CD8-positive, alpha-beta memory T cell (primary cell): ENCODE measurements at regions of chr5 and their contacts with region 1.

Region 1: DNA sequence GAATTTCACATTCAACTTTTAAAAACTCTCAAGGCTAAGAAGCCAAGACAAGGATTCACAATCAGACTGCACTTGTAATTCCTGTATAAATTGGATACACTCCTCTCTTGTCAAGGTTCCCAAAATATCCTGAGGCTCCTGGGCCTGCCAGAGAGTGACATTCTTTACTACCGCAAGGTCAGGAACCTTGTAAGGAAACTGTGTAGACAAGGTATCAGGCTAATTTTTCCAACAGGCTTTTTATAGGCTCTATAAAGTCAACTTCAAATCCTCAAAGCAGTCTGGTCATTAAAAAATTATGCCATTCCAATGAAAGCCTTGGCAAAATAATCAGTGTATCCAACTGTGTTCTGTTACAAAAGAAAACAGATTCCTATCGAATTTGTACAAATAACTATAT is 15.5 kb upstream of the PAIP1 start:
- DNase-seq: no peak
- H3K4me3 ChIP-seq: no peak overlapping the region
- H3K4me3 Mint-ChIP-seq: no peak overlapping the region
- H3K27ac ChIP-seq: no peak overlapping the region
- H3K27ac Mint-ChIP-seq: peak overlapping the region in 1 of 8 donors; percentile 32
- H3K4me1 ChIP-seq: no peaks in the 10 kb centered on the region
- H3K4me1 Mint-ChIP-seq: peaks cover 0 to 1% (median 0%) of the 10 kb centered on the region in 3 donors
- H3K27me3 ChIP-seq: no peaks in the 10 kb centered on the region
- H3K27me3 Mint-ChIP-seq: peaks cover 0 to 1% of the 10 kb centered on the region in 2 donors

Region 2: GRCh38 chr5:43179836-43180235 is 392.5 kb before region 1 on chr5:
- CTCF ChIA-PET with region 1: no interaction called
- POLR2A ChIA-PET with region 1: interaction called, 10 read pairs
- DNase-seq: no peak
- H3K4me3 ChIP-seq: no peak overlapping the region
- H3K4me3 Mint-ChIP-seq: no peak overlapping the region
- H3K27ac ChIP-seq: no peak overlapping the region
- H3K27ac Mint-ChIP-seq: peak overlapping the region in 1 of 8 donors; percentile 55
- H3K4me1 ChIP-seq: no peaks in the 10 kb centered on the region
- H3K4me1 Mint-ChIP-seq: no peaks in the 10 kb centered on the region
- H3K27me3 ChIP-seq: no peaks in the 10 kb centered on the region
- H3K27me3 Mint-ChIP-seq: no peaks in the 10 kb centered on the region